ENCODE measurements at regions of chr11 and their contacts with region 1.

Region 1: GRCh38 chr11:119728651-119729580 is at the start of gene NECTIN1:
- DNase-seq: peak; percentile 67 to 90 (median 84)
- ATAC-seq: peak; percentile 86
- H3K4me3 ChIP-seq: peak within 1 kb of the TSS; percentile 56 to 88
- H3K4me3 Mint-ChIP-seq: peak within 1 kb of the TSS; percentile 94
- H3K27ac ChIP-seq: no peak within 1 kb of the TSS
- H3K27ac Mint-ChIP-seq: peak within 1 kb of the TSS; percentile 86
- H3K4me1 ChIP-seq: peaks cover 20% of the 10 kb centered on the region
- H3K4me1 Mint-ChIP-seq: peaks cover 19% of the 10 kb centered on the region
- H3K27me3 ChIP-seq: peaks cover 9 to 15% of the 10 kb centered on the region in 2 experiments
- H3K27me3 Mint-ChIP-seq: peaks cover 16% of the 10 kb centered on the region
- CTCF ChIP-seq: peak; percentile 96
- total RNA-seq, gene NECTIN1: 6.4 to 6.9 TPM

Region 2: GRCh38 chr11:119481021-119481666 is 247.8 kb before region 1 on chr11:
- CTCF ChIA-PET with region 1: no interaction called
- POLR2A ChIA-PET with region 1: no interaction called
- intact Hi-C with region 1: loop called in 1 of 2 experiments (anchors 5 kb)
- DNase-seq: peak; percentile 34 to 73 (median 60)
- ATAC-seq: peak; percentile 51
- H3K4me3 ChIP-seq: no peak overlapping the region
- H3K4me3 Mint-ChIP-seq: no peak overlapping the region
- H3K27ac ChIP-seq: no peak overlapping the region
- H3K27ac Mint-ChIP-seq: no peak overlapping the region
- H3K4me1 ChIP-seq: no peaks in the 10 kb centered on the region
- H3K4me1 Mint-ChIP-seq: no peaks in the 10 kb centered on the region
- H3K27me3 ChIP-seq: peaks cover 2 to 5% of the 10 kb centered on the region in 2 experiments
- H3K27me3 Mint-ChIP-seq: peaks cover 32% of the 10 kb centered on the region
- CTCF ChIP-seq: peak; percentile 78

Region 3: GRCh38 chr11:119641983-119642745 is 86.8 kb before region 1 on chr11:
- CTCF ChIA-PET with region 1: interaction called, 14 read pairs
- POLR2A ChIA-PET with region 1: no interaction called
- intact Hi-C with region 1: loop called in 1 of 2 experiments (anchors 1 kb)
- DNase-seq: peak in 4 of 9 experiments; percentile 12 to 50 (median 28)
- ATAC-seq: no peak
- H3K4me3 ChIP-seq: no peak overlapping the region
- H3K4me3 Mint-ChIP-seq: no peak overlapping the region
- H3K27ac ChIP-seq: no peak overlapping the region
- H3K27ac Mint-ChIP-seq: no peak overlapping the region
- H3K4me1 ChIP-seq: no peaks in the 10 kb centered on the region
- H3K4me1 Mint-ChIP-seq: no peaks in the 10 kb centered on the region
- H3K27me3 ChIP-seq: no peaks in the 10 kb centered on the region
- H3K27me3 Mint-ChIP-seq: peaks cover 2% of the 10 kb centered on the region
- CTCF ChIP-seq: peak; percentile 51

Region 4: GRCh38 chr11:119694334-119694733 is 34.6 kb before region 1 on chr11:
- CTCF ChIA-PET with region 1: interaction called, 32 read pairs
- POLR2A ChIA-PET with region 1: no interaction called
- intact Hi-C with region 1: no loop called
- DNase-seq: peak in 1 of 9 experiments; percentile 30
- ATAC-seq: no peak
- H3K4me3 ChIP-seq: no peak overlapping the region
- H3K4me3 Mint-ChIP-seq: no peak overlapping the region
- H3K27ac ChIP-seq: no peak overlapping the region
- H3K27ac Mint-ChIP-seq: no peak overlapping the region
- H3K4me1 ChIP-seq: peaks cover 13% of the 10 kb centered on the region
- H3K4me1 Mint-ChIP-seq: peaks cover 16% of the 10 kb centered on the region
- H3K27me3 ChIP-seq: no peaks in the 10 kb centered on the region
- H3K27me3 Mint-ChIP-seq: no peaks in the 10 kb centered on the region
- CTCF ChIP-seq: no peak

Region 5: DNA sequence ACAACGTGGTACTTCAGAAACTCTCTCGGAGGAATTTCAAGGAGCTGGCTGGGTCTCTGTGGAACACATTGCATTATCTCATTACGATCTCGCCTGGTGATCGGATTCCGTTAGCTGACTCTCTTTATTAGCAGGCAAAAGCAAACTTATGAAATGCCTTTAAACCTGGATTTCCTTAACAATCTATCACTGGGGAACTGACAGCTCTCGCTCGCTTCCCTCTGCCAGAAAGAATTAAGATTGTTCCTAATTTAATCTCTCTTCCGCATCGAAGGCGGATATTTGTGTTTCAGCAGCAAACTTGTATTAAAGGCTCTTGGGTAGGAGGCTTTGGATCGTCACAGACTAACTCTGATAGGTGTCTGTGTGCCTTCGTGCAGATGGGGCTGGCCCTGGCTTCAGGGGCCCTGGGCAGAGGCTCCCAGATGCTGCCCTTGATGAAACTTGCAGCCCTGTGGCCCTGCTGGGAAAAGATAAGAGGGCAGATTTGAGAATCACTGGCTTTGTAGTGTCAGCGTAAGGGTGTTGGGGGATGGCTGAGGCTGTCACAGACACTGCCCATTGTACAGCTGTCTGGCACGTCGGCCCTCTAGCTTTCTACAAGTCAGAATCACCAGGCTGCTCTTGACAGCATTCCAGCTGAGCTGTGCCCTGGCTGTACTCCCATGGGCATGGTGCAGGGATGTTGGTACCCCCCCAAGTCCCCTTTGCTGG is 162.3 kb after region 1 on chr11:
- CTCF ChIA-PET with region 1: no interaction called
- POLR2A ChIA-PET with region 1: no interaction called
- intact Hi-C with region 1: no loop called
- DNase-seq: no peak
- ATAC-seq: no peak
- H3K4me3 ChIP-seq: no peak overlapping the region
- H3K4me3 Mint-ChIP-seq: no peak overlapping the region
- H3K27ac ChIP-seq: no peak overlapping the region
- H3K27ac Mint-ChIP-seq: no peak overlapping the region
- H3K4me1 ChIP-seq: no peaks in the 10 kb centered on the region
- H3K4me1 Mint-ChIP-seq: no peaks in the 10 kb centered on the region
- H3K27me3 ChIP-seq: no peaks in the 10 kb centered on the region
- H3K27me3 Mint-ChIP-seq: peaks cover 5% of the 10 kb centered on the region
- CTCF ChIP-seq: no peak

Region 6: DNA sequence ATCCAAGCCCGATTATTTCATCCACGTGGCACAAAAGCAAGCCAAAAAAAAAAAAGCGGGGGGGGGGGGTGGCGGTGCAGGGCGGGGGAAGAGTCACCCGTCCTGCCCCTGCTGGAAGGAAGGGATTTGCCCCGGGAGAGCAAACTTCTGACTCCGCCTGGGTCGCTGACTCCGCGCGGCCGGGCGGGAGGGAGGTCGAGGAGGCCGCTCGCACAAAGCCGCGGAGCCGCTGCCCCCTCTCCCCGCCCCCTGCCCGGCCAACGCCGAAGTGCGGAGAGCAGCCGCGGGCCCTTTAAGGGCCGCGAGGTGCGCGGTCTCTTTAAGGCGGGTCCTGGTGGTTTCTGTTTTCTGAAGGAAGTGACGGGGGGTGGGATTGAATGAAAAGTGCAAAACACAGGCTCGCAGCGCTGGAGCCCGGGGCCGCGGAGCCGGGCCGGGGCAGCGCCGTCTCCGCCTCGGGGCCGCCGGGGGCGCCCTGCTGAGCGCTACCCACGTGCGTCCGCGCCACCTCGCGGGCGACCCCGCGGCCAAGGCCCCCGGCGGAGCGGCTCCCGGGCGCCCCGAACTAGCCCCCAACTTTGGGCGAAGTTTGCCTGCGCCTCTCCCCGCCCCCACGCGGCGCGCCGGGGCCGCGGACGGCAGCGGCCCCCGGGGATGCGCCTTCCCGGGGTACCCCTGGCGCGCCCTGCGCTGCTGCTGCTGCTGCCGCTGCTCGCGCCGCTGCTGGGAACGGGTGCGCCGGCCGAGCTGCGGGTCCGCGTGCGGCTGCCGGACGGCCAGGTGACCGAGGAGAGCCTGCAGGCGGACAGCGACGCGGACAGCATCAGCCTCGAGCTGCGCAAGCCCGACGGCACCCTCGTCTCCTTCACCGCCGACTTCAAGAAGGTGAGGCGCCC is 482.0 kb after region 1 on chr11 and contains the start of gene OAF:
- CTCF ChIA-PET with region 1: no interaction called
- POLR2A ChIA-PET with region 1: no interaction called
- intact Hi-C with region 1: loop called (anchors 1 to 5 kb)
- DNase-seq: peak; percentile 10 to 86 (median 57)
- ATAC-seq: peak; percentile 91
- H3K4me3 ChIP-seq: peak within 1 kb of the TSS; percentile 51 to 87
- H3K4me3 Mint-ChIP-seq: peak within 1 kb of the TSS; percentile 93
- H3K27ac ChIP-seq: peak within 1 kb of the TSS in 1 of 2 experiments; percentile 20
- H3K27ac Mint-ChIP-seq: peak within 1 kb of the TSS; percentile 63
- H3K4me1 ChIP-seq: peaks cover 13% of the 10 kb centered on the region
- H3K4me1 Mint-ChIP-seq: peaks cover 21% of the 10 kb centered on the region
- H3K27me3 ChIP-seq: peaks cover 0 to 2% of the 10 kb centered on the region in 2 experiments
- H3K27me3 Mint-ChIP-seq: peaks cover 15% of the 10 kb centered on the region
- CTCF ChIP-seq: no peak
- total RNA-seq, gene OAF: 5.5 to 6.5 TPM

Measured in CD8-positive, alpha-beta T cell (primary cell).